ENCODE measurements at regions of chr11 and their contacts with region 1.

Region 1: GRCh38 chr11:61733120-61733978 is 19.1 kb upstream of the MYRF start:
- DNase-seq: peak; percentile 90
- H3K4me3 Mint-ChIP-seq: no peak overlapping the region
- H3K27ac Mint-ChIP-seq: no peak overlapping the region
- H3K4me1 Mint-ChIP-seq: peaks cover 2% of the 10 kb centered on the region
- H3K27me3 Mint-ChIP-seq: no peaks in the 10 kb centered on the region

Region 2: DNA sequence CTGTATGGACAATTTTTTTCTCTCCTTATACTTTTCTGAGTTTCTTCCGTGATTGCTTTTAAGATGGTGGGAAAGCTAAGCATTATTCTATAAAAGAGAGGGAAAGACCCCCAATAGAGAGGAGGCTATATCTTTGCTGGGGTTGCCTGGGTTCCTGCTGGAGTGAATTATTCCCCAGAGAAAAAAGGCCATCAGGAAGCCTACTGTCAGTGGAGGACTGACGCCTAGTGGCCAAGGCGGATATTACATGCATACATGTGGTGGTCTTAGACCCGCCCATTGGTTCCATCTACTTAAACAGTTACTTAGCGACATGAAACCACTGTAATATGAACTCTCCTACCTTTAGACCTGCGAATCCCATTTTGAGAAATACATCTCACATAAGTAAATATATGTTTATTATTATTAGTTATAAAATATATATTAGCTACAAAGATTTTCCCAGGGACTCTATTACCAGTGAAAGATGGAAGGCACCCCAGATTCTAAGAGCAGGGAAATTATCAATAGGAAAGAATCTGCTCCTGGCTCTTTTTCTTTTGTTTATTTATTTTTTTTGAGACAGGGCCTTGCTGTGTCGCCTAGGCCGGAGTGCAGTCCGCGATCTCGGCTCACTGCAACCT is 545.7 kb before region 1 on chr11:
- CTCF ChIA-PET with region 1: no interaction called
- POLR2A ChIA-PET with region 1: no interaction called
- intact Hi-C with region 1: no loop called
- DNase-seq: peak; percentile 85
- H3K4me3 Mint-ChIP-seq: peak overlapping the region; percentile 33
- H3K27ac Mint-ChIP-seq: no peak overlapping the region
- H3K4me1 Mint-ChIP-seq: peaks cover 2% of the 10 kb centered on the region
- H3K27me3 Mint-ChIP-seq: peaks cover 3% of the 10 kb centered on the region

Region 3: GRCh38 chr11:61679893-61680621 is 53.3 kb before region 1 on chr11 and contains the start of gene DAGLA:
- CTCF ChIA-PET with region 1: interaction called, 59 read pairs
- POLR2A ChIA-PET with region 1: no interaction called
- intact Hi-C with region 1: loop called (anchors 1 kb)
- DNase-seq: peak; percentile 82
- H3K4me3 Mint-ChIP-seq: peak within 1 kb of the TSS; percentile 31
- H3K27ac Mint-ChIP-seq: no peak within 1 kb of the TSS
- H3K4me1 Mint-ChIP-seq: peaks cover 4% of the 10 kb centered on the region
- H3K27me3 Mint-ChIP-seq: peaks cover 11% of the 10 kb centered on the region
- total RNA-seq, gene DAGLA: 0.12 to 0.15 TPM

Region 4: GRCh38 chr11:61695917-61696316 is 37.4 kb before region 1 on chr11:
- CTCF ChIA-PET with region 1: interaction called, 11 read pairs
- POLR2A ChIA-PET with region 1: interaction called, 3 read pairs
- intact Hi-C with region 1: loop called (anchors 1 kb)
- DNase-seq: peak; percentile 97
- H3K4me3 Mint-ChIP-seq: peak overlapping the region; percentile 32
- H3K27ac Mint-ChIP-seq: peak overlapping the region; percentile 62
- H3K4me1 Mint-ChIP-seq: peaks cover 22% of the 10 kb centered on the region
- H3K27me3 Mint-ChIP-seq: no peaks in the 10 kb centered on the region

Region 5: DNA sequence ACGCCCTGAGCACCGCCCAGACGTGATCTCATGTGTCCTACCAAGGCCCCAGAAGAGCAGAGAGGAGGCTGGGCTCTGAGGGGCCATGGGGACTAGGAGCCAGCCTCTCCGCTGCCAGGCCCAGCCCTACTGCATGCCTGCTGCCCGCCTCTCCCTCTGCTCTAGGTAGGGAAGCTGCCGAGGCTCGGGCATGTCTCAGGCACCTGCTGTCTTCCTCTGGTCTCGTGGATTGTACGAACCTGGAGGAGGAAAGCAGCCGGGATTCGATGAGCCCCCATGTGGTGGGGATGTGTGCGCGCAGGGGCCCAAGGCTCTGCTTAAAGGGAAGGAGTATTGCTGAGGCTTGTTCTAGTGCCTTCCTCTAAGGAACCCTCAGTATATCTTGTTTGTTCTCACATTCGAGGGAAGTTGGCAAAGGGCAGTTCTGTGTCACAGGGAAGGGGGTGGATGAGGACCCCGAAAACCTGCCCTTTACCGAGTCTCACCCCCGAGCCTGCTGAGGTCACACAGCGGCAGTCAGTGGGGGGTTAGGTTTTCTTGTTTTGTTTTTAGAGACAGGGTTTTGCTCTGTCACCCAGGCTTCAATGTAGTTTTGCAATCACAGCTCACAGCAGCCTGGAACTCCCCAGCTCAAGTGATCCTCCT is 32.0 kb before region 1 on chr11:
- CTCF ChIA-PET with region 1: interaction called, 11 read pairs
- POLR2A ChIA-PET with region 1: interaction called, 3 read pairs
- intact Hi-C with region 1: loop called (anchors 1 kb)
- DNase-seq: no peak
- H3K4me3 Mint-ChIP-seq: no peak overlapping the region
- H3K27ac Mint-ChIP-seq: no peak overlapping the region
- H3K4me1 Mint-ChIP-seq: peaks cover 13% of the 10 kb centered on the region
- H3K27me3 Mint-ChIP-seq: no peaks in the 10 kb centered on the region

Region 6: DNA sequence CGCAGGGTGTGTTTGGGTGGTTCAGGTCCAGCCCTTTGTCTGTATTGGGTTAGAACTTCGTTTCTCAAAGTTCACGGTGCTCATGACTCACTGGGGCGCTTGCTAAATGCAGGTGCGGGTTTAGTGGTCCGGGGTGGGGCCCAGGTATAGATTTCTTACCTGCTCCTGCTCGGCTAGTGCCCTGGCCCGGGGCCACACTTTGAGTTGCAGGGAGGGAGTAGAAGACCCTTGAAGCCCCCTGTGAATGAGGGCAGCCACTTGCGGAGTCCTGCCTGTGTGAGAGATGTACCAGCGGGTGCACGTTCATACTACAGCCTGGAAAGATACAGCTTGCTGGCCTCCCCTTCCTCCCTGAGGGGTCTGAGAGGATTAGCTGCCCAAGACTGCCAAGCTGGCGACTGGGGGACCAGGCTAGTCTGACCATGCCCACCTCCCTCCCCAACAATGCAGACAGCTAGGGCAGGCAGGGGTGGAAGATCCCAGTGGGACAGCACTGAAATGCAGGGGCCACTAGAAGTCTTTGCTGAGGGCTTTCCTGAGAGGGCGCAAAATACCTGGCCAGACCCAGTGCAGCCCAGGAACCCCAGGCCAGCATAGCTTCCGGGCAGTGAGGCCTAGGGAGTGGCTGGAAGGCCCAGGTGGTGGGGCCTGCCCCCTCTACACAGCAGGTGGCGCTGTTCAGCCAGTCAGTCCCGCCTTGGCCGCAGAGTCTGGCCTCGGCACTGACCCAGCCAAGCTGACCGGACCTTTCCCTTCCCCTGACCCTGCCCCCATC is 14.0 kb after region 1 on chr11:
- CTCF ChIA-PET with region 1: interaction called, 16 read pairs
- POLR2A ChIA-PET with region 1: no interaction called
- intact Hi-C with region 1: no loop called
- DNase-seq: peak; percentile 66
- H3K4me3 Mint-ChIP-seq: no peak overlapping the region
- H3K27ac Mint-ChIP-seq: no peak overlapping the region
- H3K4me1 Mint-ChIP-seq: peaks cover 2% of the 10 kb centered on the region
- H3K27me3 Mint-ChIP-seq: peaks cover 18% of the 10 kb centered on the region

Measured in activated CD4-positive, alpha-beta memory T cell treated with anti-CD3 and anti-CD28 coated beads for 36 hours (primary cell).